Activated CD4-positive, alpha-beta T cell treated with anti-CD3 and anti-CD28 coated beads for 36 hours (primary cell): ENCODE measurements at regions of chr20 and their contacts with region 1.

Region 1: GRCh38 chr20:10219452-10219791 is 792 bp downstream of the SNAP25 start:
- DNase-seq: peak; percentile 85
- ATAC-seq: no peak
- H3K4me3 Mint-ChIP-seq: no peak overlapping the region
- H3K27ac Mint-ChIP-seq: no peak overlapping the region
- H3K4me1 Mint-ChIP-seq: peaks cover 14% of the 10 kb centered on the region
- H3K27me3 Mint-ChIP-seq: peaks cover 46% of the 10 kb centered on the region

Region 2: GRCh38 chr20:10336959-10337728 is 117.7 kb after region 1 on chr20:
- CTCF ChIA-PET with region 1: no interaction called
- POLR2A ChIA-PET with region 1: no interaction called
- intact Hi-C with region 1: no loop called
- DNase-seq: no peak
- ATAC-seq: peak; percentile 30
- H3K4me3 Mint-ChIP-seq: no peak overlapping the region
- H3K27ac Mint-ChIP-seq: no peak overlapping the region
- H3K4me1 Mint-ChIP-seq: peaks cover 9% of the 10 kb centered on the region
- H3K27me3 Mint-ChIP-seq: peaks cover 18% of the 10 kb centered on the region

Region 3: GRCh38 chr20:10357974-10358373 is 138.6 kb after region 1 on chr20:
- CTCF ChIA-PET with region 1: no interaction called
- POLR2A ChIA-PET with region 1: no interaction called
- intact Hi-C with region 1: loop called (anchors 2 to 5 kb)
- DNase-seq: no peak
- ATAC-seq: no peak
- H3K4me3 Mint-ChIP-seq: no peak overlapping the region
- H3K27ac Mint-ChIP-seq: no peak overlapping the region
- H3K4me1 Mint-ChIP-seq: peaks cover 4% of the 10 kb centered on the region
- H3K27me3 Mint-ChIP-seq: no peaks in the 10 kb centered on the region